ENCODE measurements at regions of chr15 and their contacts with region 1.

Region 1: GRCh38 chr15:31867536-31868442 is 162.5 kb upstream of the CHRNA7 start:
- DNase-seq: peak; percentile 65
- H3K4me3 Mint-ChIP-seq: peak overlapping the region; percentile 40
- H3K27ac Mint-ChIP-seq: no peak overlapping the region
- H3K4me1 Mint-ChIP-seq: peaks cover 12% of the 10 kb centered on the region
- H3K27me3 Mint-ChIP-seq: peaks cover 13% of the 10 kb centered on the region
- CTCF ChIP-seq: peak; percentile 89

Region 2: DNA sequence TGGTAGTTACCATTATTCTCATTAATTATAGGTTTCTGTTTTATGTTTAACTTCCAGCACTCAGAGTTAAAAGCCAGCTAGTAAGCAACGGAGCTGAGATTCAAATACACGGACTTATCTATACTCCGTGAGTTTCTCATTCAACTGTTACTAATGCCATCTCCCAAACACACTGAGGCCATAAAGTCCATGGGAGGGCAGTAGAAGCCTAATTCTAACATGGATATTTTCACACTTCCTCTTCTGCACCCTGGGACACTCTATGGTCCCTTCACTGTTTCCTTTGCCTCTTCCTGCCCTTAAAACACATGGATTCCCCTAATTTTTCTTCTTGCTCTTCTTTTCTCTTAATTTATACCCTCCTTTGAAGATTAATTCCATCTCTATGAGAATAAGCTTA is 296.1 kb before region 1 on chr15:
- CTCF ChIA-PET with region 1: interaction called, 11 read pairs
- POLR2A ChIA-PET with region 1: no interaction called
- intact Hi-C with region 1: loop called (anchors 1 kb)
- DNase-seq: peak; percentile 41
- H3K4me3 Mint-ChIP-seq: no peak overlapping the region
- H3K27ac Mint-ChIP-seq: no peak overlapping the region
- H3K4me1 Mint-ChIP-seq: peaks cover 5% of the 10 kb centered on the region
- H3K27me3 Mint-ChIP-seq: no peaks in the 10 kb centered on the region
- CTCF ChIP-seq: peak; percentile 42

Region 3: GRCh38 chr15:31727612-31728011 is 140.2 kb before region 1 on chr15:
- CTCF ChIA-PET with region 1: interaction called, 3 read pairs
- POLR2A ChIA-PET with region 1: no interaction called
- intact Hi-C with region 1: loop called (anchors 10 kb)
- DNase-seq: peak; percentile 1
- H3K4me3 Mint-ChIP-seq: no peak overlapping the region
- H3K27ac Mint-ChIP-seq: no peak overlapping the region
- H3K4me1 Mint-ChIP-seq: peaks cover 11% of the 10 kb centered on the region
- H3K27me3 Mint-ChIP-seq: no peaks in the 10 kb centered on the region
- CTCF ChIP-seq: no peak

Region 4: GRCh38 chr15:31805090-31805662 is 62.6 kb before region 1 on chr15:
- CTCF ChIA-PET with region 1: interaction called, 5 read pairs
- POLR2A ChIA-PET with region 1: interaction called, 3 read pairs
- intact Hi-C with region 1: loop called (anchors 5 kb)
- DNase-seq: no peak
- H3K4me3 Mint-ChIP-seq: no peak overlapping the region
- H3K27ac Mint-ChIP-seq: no peak overlapping the region
- H3K4me1 Mint-ChIP-seq: peaks cover 23% of the 10 kb centered on the region
- H3K27me3 Mint-ChIP-seq: no peaks in the 10 kb centered on the region
- CTCF ChIP-seq: no peak